Gastrocnemius medialis (tissue), 4 donors: ENCODE measurements at regions of chr19 and their contacts with region 1.

Region 1: DNA sequence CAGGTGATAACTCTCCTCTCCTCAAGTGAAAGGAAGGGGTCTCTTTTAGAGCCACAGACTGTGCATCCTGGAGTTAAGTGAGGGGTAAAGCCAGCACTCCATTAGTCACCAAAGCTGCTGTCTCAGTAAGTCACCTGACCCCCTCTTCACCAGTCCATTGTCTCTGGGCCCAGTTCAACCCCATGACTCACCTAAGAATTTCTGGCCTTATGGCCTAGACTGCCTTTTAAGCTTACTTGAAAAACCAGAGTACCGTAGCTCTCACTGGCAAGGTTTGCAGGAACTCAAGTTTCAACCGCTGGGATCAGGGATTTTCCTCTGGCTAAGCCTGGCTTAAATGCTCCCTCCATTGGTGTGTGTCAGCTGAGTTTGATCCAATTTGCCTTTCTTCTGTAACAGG is 23.4 kb upstream of the EID2 start:
- DNase-seq: no peak
- ATAC-seq: peak in 1 of 2 donors; percentile 39
- H3K4me3 ChIP-seq: no peak overlapping the region
- H3K27ac ChIP-seq: no peak overlapping the region
- H3K4me1 ChIP-seq: no peaks in the 10 kb centered on the region
- H3K27me3 ChIP-seq: peaks cover 0 to 2% (median 0%) of the 10 kb centered on the region in 3 donors
- CTCF ChIP-seq: no peak
- POLR2A ChIP-seq: no peak

Region 2: DNA sequence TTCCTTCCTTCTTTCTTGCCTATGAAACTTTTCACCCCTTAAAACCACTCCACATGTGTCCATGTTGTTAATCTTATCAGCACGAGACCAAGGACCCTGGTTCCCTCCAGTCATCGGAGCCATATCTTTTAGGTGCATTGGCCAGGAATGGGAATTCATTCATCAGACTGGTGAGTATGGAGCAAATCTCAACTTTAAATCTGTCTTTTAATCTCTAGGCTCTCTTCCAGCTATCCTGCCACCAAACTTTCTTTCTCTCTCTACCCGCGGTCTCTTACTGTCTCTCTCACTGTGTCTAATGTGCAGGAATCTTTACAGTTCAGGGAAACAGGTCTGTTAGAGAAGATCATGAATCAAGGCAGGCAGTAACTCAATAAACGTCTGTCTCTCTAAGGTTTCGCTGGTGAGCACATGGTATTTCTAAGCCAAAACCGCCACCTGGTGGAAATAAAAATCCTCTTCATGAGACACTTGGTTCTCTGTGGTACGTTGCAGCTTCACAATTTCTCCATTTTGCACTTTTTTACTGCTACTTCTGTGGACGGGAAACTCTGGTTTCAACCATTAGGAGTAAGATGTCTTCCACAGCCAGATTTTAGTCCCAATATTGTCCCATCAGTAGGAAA is 108.4 kb after region 1 on chr19:
- in situ Hi-C with region 1: loop called in 3 of 4 experiments (anchors 5 to 10 kb)
- intact Hi-C with region 1: no loop called
- DNase-seq: no peak
- ATAC-seq: peak; percentile 69 to 72
- H3K4me3 ChIP-seq: no peak overlapping the region
- H3K27ac ChIP-seq: no peak overlapping the region
- H3K4me1 ChIP-seq: no peaks in the 10 kb centered on the region
- H3K27me3 ChIP-seq: peaks cover 0 to under 1% (median 0%) of the 10 kb centered on the region in 3 donors
- CTCF ChIP-seq: peak; percentile 54 to 65 (median 62)
- POLR2A ChIP-seq: no peak

Region 3: DNA sequence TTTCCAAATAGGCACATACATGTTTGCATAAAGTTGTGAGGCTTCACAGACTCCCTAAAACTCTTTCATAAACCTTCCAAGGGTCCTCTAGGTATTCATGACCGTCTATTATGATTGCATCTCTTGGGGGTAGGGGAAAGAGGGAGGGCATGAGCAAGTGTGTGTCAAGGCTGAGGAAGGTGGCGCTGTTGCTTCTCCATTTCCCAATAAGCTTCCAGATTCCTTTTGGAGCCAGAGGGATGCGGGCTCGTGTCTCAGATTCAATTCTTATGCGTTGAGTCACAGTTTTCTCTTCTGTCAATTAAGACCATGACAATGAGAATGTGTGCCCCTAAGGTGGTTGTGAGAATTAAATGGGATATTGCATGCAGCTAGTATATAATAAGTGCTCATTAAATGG is 1369.6 kb after region 1 on chr19:
- in situ Hi-C with region 1: no loop called
- intact Hi-C with region 1: no loop called
- DNase-seq: no peak
- ATAC-seq: no peak
- H3K4me3 ChIP-seq: no peak overlapping the region
- H3K27ac ChIP-seq: no peak overlapping the region
- H3K4me1 ChIP-seq: no peaks in the 10 kb centered on the region
- H3K27me3 ChIP-seq: peaks cover 0 to 3% (median 0%) of the 10 kb centered on the region in 3 donors
- CTCF ChIP-seq: no peak
- POLR2A ChIP-seq: no peak